Mammary epithelial cell (primary cell): ENCODE measurements at regions of chr6 and their contacts with region 1.

Region 1: GRCh38 chr6:29663300-29664042 is 6.6 kb downstream of the MOG start:
- DNase-seq: no peak
- H3K4me3 ChIP-seq: no peak overlapping the region
- H3K27ac ChIP-seq: no peak overlapping the region
- H3K4me1 ChIP-seq: no peaks in the 10 kb centered on the region
- H3K27me3 ChIP-seq: no peaks in the 10 kb centered on the region
- CTCF ChIP-seq: no peak

Region 2: DNA sequence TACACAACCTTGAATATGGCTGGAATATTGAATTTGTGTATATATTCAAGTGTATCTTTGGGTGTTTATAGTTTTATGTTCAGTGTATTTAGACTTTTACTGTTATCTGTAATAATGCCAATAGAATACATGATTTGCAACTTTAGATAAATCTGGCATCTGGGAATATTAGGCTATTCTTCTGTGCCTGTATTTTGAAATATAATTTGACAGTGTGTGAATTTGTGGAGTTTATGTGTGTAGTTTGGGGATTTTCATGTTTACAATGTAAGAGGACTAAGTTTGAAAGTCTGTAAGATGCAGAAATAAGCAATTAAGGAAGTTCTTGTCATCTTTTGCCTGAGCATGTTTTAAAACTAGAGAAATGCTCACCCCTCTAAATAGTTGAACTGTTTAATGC is 224.5 kb before region 1 on chr6 and contains the start of gene OR10C1:
- CTCF ChIA-PET with region 1: no interaction called
- dilution Hi-C with region 1: no loop called
- in situ Hi-C with region 1: no loop called
- intact Hi-C with region 1: no loop called
- DNase-seq: no peak
- H3K4me3 ChIP-seq: no peak within 1 kb of the TSS
- H3K27ac ChIP-seq: no peak within 1 kb of the TSS
- H3K4me1 ChIP-seq: no peaks in the 10 kb centered on the region
- H3K27me3 ChIP-seq: peaks cover 3% of the 10 kb centered on the region
- CTCF ChIP-seq: no peak
- total RNA-seq, gene OR10C1: not detected

Region 3: DNA sequence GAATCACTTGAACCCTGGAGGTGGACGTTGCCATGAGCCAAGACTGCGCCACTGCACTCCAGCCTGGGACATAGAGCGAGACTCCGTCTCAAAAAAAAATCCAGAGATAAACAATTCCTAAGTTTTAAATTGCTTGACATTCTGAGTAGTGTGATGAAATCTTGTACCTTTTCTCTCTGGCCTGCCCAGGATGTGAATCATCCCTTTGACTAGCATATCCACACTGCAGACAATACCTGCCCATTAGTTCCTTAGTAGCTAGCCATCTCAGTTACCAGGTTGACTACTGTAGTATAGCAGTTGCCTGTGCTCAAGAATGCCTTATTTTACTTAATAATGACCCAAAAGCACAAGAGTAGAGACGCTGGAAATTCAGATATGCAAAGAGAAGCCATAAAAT is 14.6 kb after region 1 on chr6:
- CTCF ChIA-PET with region 1: no interaction called
- dilution Hi-C with region 1: no loop called
- in situ Hi-C with region 1: no loop called
- intact Hi-C with region 1: loop called (anchors 2 kb)
- DNase-seq: peak; percentile 88
- H3K4me3 ChIP-seq: peak overlapping the region in 1 of 3 experiments; percentile 2
- H3K27ac ChIP-seq: peak overlapping the region; percentile 84
- H3K4me1 ChIP-seq: peaks cover 53% of the 10 kb centered on the region
- H3K27me3 ChIP-seq: no peaks in the 10 kb centered on the region
- CTCF ChIP-seq: no peak

Region 4: DNA sequence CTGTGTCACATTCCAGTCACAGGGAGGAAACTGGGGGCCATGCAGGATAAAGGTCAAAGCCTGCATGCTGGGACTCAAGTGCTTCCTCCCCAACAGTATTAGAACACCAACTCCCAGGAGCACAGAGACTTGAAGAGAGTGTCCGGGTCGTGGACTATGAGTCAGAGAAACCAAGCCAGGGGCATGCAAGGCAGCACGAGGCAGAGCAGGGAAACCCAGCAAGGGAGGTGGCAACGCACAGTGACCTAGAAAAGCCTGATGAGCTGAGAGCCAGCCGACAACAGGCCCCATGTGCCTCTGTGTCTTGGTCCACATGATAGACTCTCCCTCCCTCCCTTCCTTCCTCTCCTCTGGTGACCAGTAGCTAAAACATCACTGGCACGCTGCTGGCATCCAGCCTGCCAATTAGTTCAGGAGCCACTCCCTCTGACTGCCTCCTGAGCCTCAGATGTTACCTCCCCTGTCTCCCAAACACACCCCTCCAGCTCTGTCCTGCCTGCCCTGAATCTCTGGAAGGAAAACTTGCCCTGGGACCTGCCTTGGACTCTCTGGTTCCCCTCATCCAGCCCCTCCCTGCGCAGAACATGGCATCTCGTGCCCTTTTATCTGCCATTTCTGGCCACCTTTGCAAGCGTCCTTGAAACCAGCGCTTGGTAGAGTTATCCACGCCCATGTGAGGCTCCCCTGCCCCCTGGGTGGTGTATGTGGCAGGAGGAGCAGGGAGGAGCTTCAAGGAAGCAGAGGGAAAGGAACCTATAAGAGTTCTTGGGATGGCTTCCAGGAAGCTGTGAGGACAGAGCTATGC is 428.3 kb after region 1 on chr6:
- CTCF ChIA-PET with region 1: no interaction called
- dilution Hi-C with region 1: no loop called
- in situ Hi-C with region 1: no loop called
- intact Hi-C with region 1: no loop called
- DNase-seq: no peak
- H3K4me3 ChIP-seq: no peak overlapping the region
- H3K27ac ChIP-seq: no peak overlapping the region
- H3K4me1 ChIP-seq: peaks cover 8% of the 10 kb centered on the region
- H3K27me3 ChIP-seq: no peaks in the 10 kb centered on the region
- CTCF ChIP-seq: no peak